ENCODE measurements at regions of chr9 and their contacts with region 1.

Region 1: DNA sequence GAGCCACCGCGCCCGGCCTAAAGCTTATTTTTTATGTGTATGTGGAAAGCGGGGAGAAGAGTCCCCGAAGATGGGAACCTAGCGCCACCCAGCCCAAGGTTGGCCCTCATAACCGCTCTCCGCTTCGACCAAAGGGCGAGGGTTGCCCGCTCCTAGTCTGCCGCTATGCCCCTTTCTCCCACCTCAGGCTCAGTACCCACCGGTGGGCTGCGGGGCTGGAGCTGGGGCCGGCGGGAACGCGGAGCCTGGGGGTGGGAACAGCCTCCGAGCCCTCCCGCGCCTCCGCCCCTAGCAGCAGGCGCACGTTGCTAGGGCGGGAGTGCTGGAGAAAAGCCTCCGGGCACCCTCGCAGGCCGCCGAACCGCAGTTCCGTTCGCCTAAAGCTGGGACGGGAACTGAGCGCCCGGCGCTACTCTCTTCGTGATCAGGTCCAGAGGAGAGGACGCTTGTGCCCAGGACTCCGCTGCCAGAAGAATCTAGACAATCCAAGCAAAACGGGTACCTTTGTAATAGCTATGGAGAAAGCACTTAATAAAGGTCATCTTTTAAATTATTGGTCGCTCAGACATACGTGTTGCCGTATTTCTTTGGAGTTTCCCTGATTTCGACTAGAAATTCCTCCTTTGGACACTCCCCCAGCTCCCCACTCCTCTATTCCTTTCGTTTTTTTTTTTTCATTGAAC is at the start of gene WDR31:
- DNase-seq: peak; percentile 95
- H3K4me3 Mint-ChIP-seq: peak within 1 kb of the TSS; percentile 81
- H3K27ac Mint-ChIP-seq: peak within 1 kb of the TSS; percentile 78
- H3K4me1 Mint-ChIP-seq: peaks cover 43% of the 10 kb centered on the region
- H3K27me3 Mint-ChIP-seq: no peaks in the 10 kb centered on the region
- total RNA-seq, gene WDR31: 2.2 and 2.7 TPM in 2 replicates

Region 2: DNA sequence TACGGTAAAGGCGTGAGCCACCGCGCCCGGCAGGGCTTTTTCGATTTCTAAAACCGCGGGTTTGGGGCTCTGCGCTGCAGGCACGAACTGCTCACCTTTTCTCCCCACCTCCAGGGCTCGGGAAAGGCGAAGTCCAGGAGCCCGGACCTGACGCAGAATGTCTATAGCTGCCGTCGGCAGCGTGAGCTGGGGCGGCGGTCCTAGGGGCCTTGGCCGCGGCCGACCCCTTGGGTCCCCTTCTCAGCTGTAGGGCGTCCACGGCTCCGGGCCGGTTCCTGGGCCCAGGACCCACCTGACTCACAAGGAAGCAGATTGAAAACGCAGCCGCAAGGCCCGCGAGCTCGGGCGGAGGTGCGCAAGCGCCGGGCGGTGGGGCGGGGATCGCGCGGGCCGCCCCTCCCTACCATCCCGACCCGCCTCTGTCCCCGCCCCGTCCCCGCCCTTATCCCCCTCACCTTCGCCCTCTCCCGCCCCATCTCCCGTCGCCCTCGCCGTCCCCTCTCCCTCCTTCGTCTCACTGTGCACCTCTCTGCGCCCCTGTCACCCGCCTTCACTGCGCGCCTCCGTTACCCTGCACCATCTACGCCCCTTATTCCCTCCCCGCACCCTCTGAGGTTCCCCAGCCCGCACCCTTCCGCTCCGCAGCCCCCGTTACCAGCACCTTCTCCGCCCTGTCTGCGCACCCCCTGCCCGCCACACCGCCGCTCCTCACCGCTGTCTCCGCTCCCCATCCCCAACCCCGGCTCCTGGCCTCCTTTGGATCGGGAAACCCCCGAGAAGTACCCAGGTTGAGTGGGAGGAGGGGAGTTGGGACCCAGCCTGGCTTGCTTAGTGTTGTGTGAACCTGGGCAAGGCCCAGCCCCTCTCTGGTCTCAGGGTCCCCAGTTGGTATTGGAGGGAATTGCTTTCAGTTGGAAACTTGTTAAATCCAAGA is 36.7 kb after region 1 on chr9 and contains the start of gene HDHD3:
- intact Hi-C with region 1: loop called (anchors 2 kb)
- DNase-seq: peak; percentile 95
- H3K4me3 Mint-ChIP-seq: peak within 1 kb of the TSS; percentile 92
- H3K27ac Mint-ChIP-seq: peak within 1 kb of the TSS; percentile 83
- H3K4me1 Mint-ChIP-seq: peaks cover 15% of the 10 kb centered on the region
- H3K27me3 Mint-ChIP-seq: no peaks in the 10 kb centered on the region
- total RNA-seq, gene HDHD3: 16.5 and 17.8 TPM in 2 replicates